ENCODE measurements at regions of chr5 and their contacts with region 1.

Region 1: GRCh38 chr5:96662725-96663513 is 743 bp downstream of the CAST start:
- DNase-seq: peak; percentile 82
- H3K4me3 Mint-ChIP-seq: peak overlapping the region; percentile 98
- H3K27ac Mint-ChIP-seq: peak overlapping the region; percentile 98
- H3K4me1 Mint-ChIP-seq: peaks cover 67% of the 10 kb centered on the region
- H3K27me3 Mint-ChIP-seq: peaks cover 11% of the 10 kb centered on the region

Region 2: DNA sequence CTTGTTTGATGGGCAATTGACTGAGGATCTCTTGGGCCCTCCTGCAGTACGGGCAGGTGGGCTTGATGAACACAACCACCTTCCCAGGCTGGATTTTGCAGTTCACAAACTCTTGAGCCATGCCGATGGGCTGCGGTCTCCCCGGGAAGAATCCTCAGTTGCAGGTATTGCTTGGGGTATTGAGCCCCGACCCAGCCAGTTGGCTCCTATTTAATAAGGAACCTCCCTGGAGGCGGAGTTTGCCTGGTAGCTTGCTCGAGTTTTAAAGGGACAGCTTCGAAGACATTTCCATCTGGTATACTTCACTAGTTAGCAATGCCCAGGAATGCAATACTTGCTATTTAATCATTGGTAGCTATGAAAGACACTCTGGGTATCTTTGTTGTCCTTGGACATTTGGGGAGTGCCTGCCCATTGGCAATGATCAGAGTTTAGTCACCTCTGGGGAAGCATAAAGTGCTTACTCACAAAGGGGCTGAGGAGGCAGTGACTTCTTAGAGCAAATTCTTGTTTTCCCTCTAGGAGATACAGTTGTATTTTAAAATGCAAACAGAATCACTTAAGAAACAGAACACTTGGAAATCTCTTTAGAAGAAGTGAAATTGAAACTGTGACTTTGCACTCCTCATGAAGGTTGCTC is 840.3 kb before region 1 on chr5 and contains the start of gene GLRX:
- intact Hi-C with region 1: loop called (anchors 1 kb)
- DNase-seq: peak; percentile 55
- H3K4me3 Mint-ChIP-seq: peak within 1 kb of the TSS; percentile 91
- H3K27ac Mint-ChIP-seq: peak within 1 kb of the TSS; percentile 91
- H3K4me1 Mint-ChIP-seq: peaks cover 68% of the 10 kb centered on the region
- H3K27me3 Mint-ChIP-seq: no peaks in the 10 kb centered on the region
- total RNA-seq, gene GLRX: 17.2 and 18.3 TPM in 2 replicates

Region 3: GRCh38 chr5:96536991-96537785 is 125.7 kb before region 1 on chr5:
- intact Hi-C with region 1: loop called (anchors 2 kb)
- DNase-seq: peak; percentile 32
- H3K4me3 Mint-ChIP-seq: no peak overlapping the region
- H3K27ac Mint-ChIP-seq: peak overlapping the region; percentile 78
- H3K4me1 Mint-ChIP-seq: peaks cover 26% of the 10 kb centered on the region
- H3K27me3 Mint-ChIP-seq: peaks cover 3% of the 10 kb centered on the region

Region 4: GRCh38 chr5:96548947-96549346 is 114.0 kb before region 1 on chr5:
- intact Hi-C with region 1: no loop called
- DNase-seq: no peak
- H3K4me3 Mint-ChIP-seq: no peak overlapping the region
- H3K27ac Mint-ChIP-seq: no peak overlapping the region
- H3K4me1 Mint-ChIP-seq: no peaks in the 10 kb centered on the region
- H3K27me3 Mint-ChIP-seq: peaks cover 22% of the 10 kb centered on the region

Region 5: DNA sequence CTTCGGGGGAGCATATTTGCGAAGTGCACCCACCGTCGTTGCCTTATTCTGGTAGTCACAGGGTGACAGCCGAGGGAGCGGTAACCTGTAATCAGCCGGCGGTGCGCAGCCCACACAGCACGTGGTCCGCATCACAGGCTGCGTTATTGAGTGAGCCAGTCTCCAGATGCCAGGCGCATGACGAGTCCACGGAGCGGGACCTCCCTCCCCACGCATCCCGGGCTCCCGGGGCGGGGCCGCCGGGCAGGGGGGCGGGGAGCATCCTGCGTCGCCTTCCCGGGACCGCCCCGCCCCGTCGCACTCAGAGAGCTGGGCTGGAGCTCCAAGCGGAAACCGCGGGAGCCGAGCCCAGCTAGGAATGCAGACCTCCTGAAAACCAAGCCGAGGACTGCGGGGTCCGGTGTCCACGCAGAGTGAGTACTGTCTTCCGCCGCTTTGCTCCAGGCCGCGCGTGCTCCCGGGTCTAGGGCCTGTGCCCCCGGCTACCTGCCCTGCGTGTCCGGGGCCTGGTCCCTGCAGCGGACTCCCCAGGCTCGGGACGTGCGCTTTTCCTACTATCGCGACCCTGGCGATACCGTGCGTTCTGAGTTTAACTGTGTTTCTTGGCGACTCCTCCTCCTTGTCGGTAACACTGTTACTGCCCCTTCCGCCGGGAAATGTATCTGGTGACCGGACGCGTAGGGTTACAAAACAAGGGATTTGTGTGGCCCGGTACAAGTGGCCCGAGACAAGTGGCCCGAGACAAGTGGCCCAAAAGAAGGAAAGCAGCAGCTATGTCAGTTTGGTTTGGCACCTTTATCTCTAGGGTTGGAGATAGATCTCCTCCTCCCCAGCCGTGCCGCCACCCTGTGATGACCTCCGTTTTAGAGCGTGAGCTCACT is 39.8 kb after region 1 on chr5:
- intact Hi-C with region 1: loop called (anchors 1 kb)
- DNase-seq: peak; percentile 65
- H3K4me3 Mint-ChIP-seq: peak overlapping the region; percentile 91
- H3K27ac Mint-ChIP-seq: peak overlapping the region; percentile 92
- H3K4me1 Mint-ChIP-seq: peaks cover 31% of the 10 kb centered on the region
- H3K27me3 Mint-ChIP-seq: no peaks in the 10 kb centered on the region

Region 6: DNA sequence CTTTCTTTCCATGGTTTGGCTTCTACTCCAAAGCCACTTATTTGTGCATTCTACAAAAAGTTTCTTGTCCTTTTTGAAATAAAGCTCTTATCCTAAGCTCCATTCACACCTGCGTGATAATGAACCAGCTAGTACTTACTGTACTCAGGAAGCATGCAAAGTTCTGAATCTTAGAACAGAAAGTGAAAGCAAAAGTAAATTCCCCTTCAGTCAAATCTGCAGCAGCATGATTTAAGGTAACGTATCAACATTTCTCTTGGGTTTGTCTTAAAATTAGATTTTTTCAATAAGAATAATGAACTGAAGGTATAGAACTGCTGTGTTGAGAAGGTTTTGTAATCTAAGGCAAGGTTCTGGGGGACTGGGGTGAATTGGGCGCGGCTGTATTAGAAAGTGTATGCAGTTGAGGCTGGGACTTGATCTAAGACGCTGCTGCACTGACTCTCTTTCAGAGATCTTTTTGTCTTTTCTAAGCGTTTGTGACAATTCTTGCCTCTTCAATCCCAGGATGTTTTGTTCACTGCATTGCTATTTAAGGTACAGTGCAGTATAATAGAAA is 213.5 kb after region 1 on chr5 and contains the start of gene ERAP2:
- intact Hi-C with region 1: loop called (anchors 5 kb)
- DNase-seq: no peak
- H3K4me3 Mint-ChIP-seq: peak within 1 kb of the TSS; percentile 93
- H3K27ac Mint-ChIP-seq: peak within 1 kb of the TSS; percentile 99
- H3K4me1 Mint-ChIP-seq: peaks cover 66% of the 10 kb centered on the region
- H3K27me3 Mint-ChIP-seq: no peaks in the 10 kb centered on the region
- total RNA-seq, gene ERAP2: 52.9 and 54.4 TPM in 2 replicates

Region 7: GRCh38 chr5:97243353-97243752 is 580.4 kb after region 1 on chr5:
- intact Hi-C with region 1: no loop called
- DNase-seq: no peak
- H3K4me3 Mint-ChIP-seq: no peak overlapping the region
- H3K27ac Mint-ChIP-seq: no peak overlapping the region
- H3K4me1 Mint-ChIP-seq: no peaks in the 10 kb centered on the region
- H3K27me3 Mint-ChIP-seq: peaks cover 1% of the 10 kb centered on the region

Measured in activated T-helper 1 cell treated with anti-CD3 and anti-CD28 coated beads, Interleukin-12 subunit alpha, Interleukin-12 subunit beta, Interleukin-2, Interleukin-4 antibody, amounts not matched to agents 30 ng/mL and 10 ng/mL and 1 ng/mL, durations not matched to agents 14 hours and 24 hours and 36 hours (primary cell).